Motor neuron (in vitro differentiated cells): ENCODE measurements at regions of chr3 and their contacts with region 1.

Region 1: GRCh38 chr3:171566803-171567422 is 106.7 kb upstream of the TNIK start:
- ATAC-seq: peak in 5 of 8 experiments; percentile 29 to 55 (median 35)
- H3K4me3 ChIP-seq: no peak overlapping the region
- H3K27ac ChIP-seq: no peak overlapping the region
- H3K4me1 ChIP-seq: peaks cover 11 to 18% of the 10 kb centered on the region in 2 donors

Region 2: GRCh38 chr3:170961616-170962400 is 605.1 kb before region 1 on chr3:
- in situ Hi-C with region 1: loop called in 7 of 9 experiments (anchors 10 to 25 kb)
- ATAC-seq: peak in 7 of 8 experiments; percentile 24 to 89 (median 71)
- H3K4me3 ChIP-seq: no peak overlapping the region
- H3K27ac ChIP-seq: no peak overlapping the region
- H3K4me1 ChIP-seq: no peaks in the 10 kb centered on the region

Region 3: DNA sequence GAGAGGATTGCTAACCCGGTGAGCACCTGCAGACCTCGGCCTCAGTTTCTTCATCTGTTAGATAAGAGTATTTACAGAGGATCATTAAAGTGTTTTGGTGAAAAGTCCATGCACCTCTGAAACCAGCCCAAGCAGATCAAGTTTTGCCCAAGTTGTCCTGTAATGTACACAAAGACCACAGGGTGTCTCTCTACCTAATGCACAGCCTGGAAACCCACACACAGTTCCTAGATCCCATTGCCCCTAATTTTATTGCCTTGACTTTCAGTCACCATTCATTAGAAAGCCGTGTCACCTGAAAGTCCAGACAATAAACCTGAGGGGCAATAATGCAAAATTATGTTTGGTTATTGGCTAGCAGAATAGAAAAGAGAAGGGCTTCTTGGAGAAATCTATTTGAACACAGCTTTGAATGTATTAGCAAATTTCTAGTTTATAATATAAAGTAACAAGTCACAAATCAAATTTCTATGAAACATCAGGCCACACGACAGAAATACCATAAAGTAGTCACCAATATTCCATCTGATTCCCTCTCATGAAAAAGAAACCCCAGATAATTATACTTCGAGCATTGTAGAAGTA is 379.1 kb before region 1 on chr3:
- in situ Hi-C with region 1: loop called in 5 of 9 experiments (anchors 25 kb)
- ATAC-seq: peak in 7 of 8 experiments; percentile 30 to 76 (median 50)
- H3K4me3 ChIP-seq: no peak overlapping the region
- H3K27ac ChIP-seq: no peak overlapping the region
- H3K4me1 ChIP-seq: no peaks in the 10 kb centered on the region

Region 4: GRCh38 chr3:171339598-171339997 is 227.3 kb before region 1 on chr3:
- in situ Hi-C with region 1: no loop called
- ATAC-seq: no peak
- H3K4me3 ChIP-seq: no peak overlapping the region
- H3K27ac ChIP-seq: no peak overlapping the region
- H3K4me1 ChIP-seq: no peaks in the 10 kb centered on the region